Activated CD4-positive, alpha-beta memory T cell treated with anti-CD3 and anti-CD28 coated beads, Interleukin-2, amount 10 ng/mL, durations not matched to agents 7 days and 5 days (primary cell): ENCODE measurements at regions of chr12 and their contacts with region 1.

Region 1: DNA sequence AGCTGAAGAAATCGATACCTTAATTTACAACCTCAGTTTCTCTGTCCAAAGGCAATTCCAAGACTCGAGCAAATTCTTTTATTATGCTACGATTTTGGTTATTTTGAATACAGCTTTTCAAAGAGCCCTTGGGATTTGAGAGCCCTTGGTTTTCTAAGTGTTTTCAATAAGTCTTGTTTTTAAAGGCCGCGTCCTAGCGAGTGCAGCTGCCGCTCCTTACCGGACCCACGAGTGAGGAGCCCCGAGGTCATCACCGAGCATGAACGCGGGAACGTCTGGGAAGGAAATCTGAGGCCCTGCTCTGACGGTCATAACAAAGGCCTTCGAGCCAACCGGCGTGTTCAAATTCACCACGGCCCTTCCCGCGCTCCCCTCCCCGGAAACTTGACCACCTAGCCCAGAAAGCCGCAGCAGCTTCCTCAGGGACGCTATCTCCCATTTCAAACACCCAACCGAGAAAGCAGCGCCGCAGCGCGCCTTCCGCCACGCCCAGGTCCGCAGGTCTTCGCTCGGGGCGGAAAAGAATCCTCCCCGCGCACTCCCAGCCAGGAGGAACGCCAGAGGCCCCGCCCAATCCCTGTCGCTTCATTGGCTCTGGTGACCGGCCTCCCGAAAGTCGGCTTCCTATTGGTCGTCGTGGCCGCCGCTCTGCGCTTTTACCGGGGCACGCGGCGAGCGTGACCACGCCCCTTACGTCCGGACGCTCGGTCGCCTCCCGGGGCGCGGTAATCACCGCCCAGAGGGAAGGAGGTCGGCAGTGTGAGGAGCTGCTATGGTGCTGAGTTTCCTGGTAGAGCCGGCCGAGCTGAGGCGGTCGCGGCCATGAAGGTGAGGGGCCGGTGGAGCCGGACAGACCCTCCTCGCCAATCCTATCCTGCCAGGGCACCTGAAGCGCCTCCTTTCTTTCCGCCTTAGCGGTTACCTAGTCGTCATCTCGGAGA is at the start of gene RNF34:
- DNase-seq: peak; percentile 99
- H3K4me3 Mint-ChIP-seq: peak within 1 kb of the TSS; percentile 90
- H3K27ac Mint-ChIP-seq: peak within 1 kb of the TSS; percentile 97
- H3K4me1 Mint-ChIP-seq: peaks cover 42% of the 10 kb centered on the region
- H3K27me3 Mint-ChIP-seq: no peaks in the 10 kb centered on the region
- total RNA-seq, gene RNF34: 88.2 to 90.1 TPM

Region 2: GRCh38 chr12:121296618-121297434 is 102.8 kb before region 1 on chr12 and contains the start of gene CAMKK2:
- CTCF ChIA-PET with region 1: no interaction called
- POLR2A ChIA-PET with region 1: interaction called, 23 read pairs
- DNase-seq: peak; percentile 90
- H3K4me3 Mint-ChIP-seq: peak within 1 kb of the TSS; percentile 88
- H3K27ac Mint-ChIP-seq: peak within 1 kb of the TSS; percentile 75
- H3K4me1 Mint-ChIP-seq: peaks cover 42% of the 10 kb centered on the region
- H3K27me3 Mint-ChIP-seq: peaks cover 1% of the 10 kb centered on the region
- total RNA-seq, gene CAMKK2: 27.6 to 29.1 TPM

Region 3: DNA sequence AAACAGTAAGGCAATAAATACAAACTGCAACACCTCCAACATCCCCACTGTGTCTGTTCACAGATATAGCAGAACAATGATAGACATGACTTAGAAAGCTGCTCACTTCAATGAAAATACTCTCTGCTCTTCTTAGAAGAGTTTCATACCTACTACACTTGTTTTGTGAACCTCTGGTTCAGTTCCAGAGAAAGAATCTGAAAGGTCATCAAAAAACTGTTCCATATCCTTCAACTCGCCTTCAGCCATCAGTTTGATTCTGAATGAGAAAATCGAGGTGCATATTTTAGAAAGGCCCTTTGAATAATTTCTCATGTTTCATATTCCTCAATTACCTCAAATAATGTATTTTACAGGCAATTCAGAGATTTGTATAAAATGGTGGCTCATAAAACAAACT is 52.9 kb before region 1 on chr12:
- CTCF ChIA-PET with region 1: interaction called, 7 read pairs
- POLR2A ChIA-PET with region 1: interaction called, 142 read pairs
- DNase-seq: no peak
- H3K4me3 Mint-ChIP-seq: no peak overlapping the region
- H3K27ac Mint-ChIP-seq: no peak overlapping the region
- H3K4me1 Mint-ChIP-seq: peaks cover 41% of the 10 kb centered on the region
- H3K27me3 Mint-ChIP-seq: no peaks in the 10 kb centered on the region

Region 4: GRCh38 chr12:121417847-121418246 is 18.2 kb after region 1 on chr12:
- CTCF ChIA-PET with region 1: interaction called, 4 read pairs
- POLR2A ChIA-PET with region 1: interaction called, 32 read pairs
- DNase-seq: no peak
- H3K4me3 Mint-ChIP-seq: no peak overlapping the region
- H3K27ac Mint-ChIP-seq: no peak overlapping the region
- H3K4me1 Mint-ChIP-seq: peaks cover 11% of the 10 kb centered on the region
- H3K27me3 Mint-ChIP-seq: no peaks in the 10 kb centered on the region

Region 5: GRCh38 chr12:121432740-121433480 is 33.2 kb after region 1 on chr12:
- CTCF ChIA-PET with region 1: no interaction called
- POLR2A ChIA-PET with region 1: interaction called, 14 read pairs
- DNase-seq: no peak
- H3K4me3 Mint-ChIP-seq: no peak overlapping the region
- H3K27ac Mint-ChIP-seq: no peak overlapping the region
- H3K4me1 Mint-ChIP-seq: peaks cover 2% of the 10 kb centered on the region
- H3K27me3 Mint-ChIP-seq: no peaks in the 10 kb centered on the region

Region 6: GRCh38 chr12:121499929-121500793 is 100.5 kb after region 1 on chr12:
- CTCF ChIA-PET with region 1: no interaction called
- POLR2A ChIA-PET with region 1: no interaction called
- DNase-seq: peak; percentile 73
- H3K4me3 Mint-ChIP-seq: no peak overlapping the region
- H3K27ac Mint-ChIP-seq: no peak overlapping the region
- H3K4me1 Mint-ChIP-seq: peaks cover 16% of the 10 kb centered on the region
- H3K27me3 Mint-ChIP-seq: no peaks in the 10 kb centered on the region

Region 7: DNA sequence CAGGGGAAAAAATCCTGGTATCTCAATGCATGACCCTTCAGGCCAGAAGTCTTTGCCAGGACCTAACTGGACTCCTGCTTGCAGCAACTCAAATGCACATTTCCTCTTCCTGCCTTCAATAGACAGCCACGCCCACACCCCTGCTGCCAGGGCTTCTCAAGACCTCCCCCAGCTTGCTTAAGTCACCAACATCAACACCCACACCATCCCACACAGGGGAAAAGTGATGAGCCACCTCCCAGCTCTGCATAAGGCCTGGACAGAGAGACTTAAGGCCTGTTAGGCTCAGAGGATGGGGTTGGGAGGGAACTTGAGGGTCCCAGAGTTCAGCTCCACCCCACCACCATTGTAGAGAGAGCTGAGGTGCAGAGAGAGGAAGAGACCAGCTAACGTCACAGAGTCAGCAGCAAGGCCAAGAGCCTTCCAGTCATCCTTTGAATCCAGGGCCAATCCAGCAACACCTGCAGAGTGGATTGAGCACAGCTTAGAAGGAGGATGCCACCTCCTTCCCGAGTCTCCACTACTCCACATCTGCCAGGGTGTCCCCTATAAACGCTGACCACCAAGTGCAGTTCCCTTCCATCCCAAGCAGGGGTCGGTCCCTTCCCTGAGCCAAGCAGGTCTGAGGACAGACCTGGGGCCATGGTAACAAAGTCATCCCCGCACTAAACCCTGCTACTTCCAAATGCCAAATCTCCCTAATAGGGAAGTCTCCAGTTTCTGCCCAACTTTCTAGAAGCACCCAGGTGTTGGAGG is 131.1 kb after region 1 on chr12:
- CTCF ChIA-PET with region 1: no interaction called
- POLR2A ChIA-PET with region 1: no interaction called
- DNase-seq: peak; percentile 80
- H3K4me3 Mint-ChIP-seq: peak overlapping the region; percentile 3
- H3K27ac Mint-ChIP-seq: peak overlapping the region; percentile 82
- H3K4me1 Mint-ChIP-seq: peaks cover 52% of the 10 kb centered on the region
- H3K27me3 Mint-ChIP-seq: no peaks in the 10 kb centered on the region

Region 8: DNA sequence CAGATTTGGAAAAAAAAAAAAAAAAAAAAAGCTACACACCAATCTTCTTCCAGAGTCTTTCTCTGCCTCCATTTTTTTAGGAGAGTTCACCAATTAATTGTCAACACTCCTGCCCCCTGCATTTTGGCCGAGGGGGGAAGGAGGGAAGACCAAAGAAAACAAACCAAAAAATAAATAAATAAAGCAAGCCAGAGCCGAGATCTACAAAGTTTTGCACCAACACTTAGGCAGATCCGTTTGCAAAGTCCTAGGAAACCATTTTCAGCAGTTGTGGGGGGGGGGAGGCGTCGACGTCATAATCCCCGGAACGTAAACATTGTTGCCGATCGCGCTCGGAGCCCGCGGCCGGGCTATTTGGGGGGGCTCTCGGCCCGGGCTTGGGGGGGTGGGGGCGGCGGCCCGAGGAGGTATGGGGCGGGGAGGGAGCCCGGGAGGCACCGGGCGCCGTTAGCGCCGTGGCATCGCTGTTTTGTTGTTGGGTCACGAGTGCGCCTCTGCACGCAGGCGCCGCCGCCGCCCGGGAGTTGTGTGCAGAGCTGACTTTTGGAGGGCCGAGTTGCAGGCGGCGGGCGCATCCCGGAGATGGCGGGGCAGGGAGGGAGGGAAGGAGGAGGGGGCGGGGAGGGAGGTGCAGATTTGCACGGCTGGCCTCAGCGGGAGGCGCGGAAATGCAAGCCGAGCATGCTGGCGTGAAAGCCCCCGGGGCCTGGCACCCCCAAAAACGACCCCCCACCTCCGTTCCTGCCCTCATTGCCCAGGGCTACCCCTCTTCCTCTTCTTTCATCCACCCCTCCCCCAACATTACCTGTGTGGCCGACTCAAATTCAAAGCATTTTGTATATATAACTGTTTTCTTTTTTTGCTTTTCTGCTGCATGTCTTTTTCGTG is 180.6 kb after region 1 on chr12:
- CTCF ChIA-PET with region 1: no interaction called
- POLR2A ChIA-PET with region 1: interaction called, 17 read pairs
- DNase-seq: peak; percentile 80
- H3K4me3 Mint-ChIP-seq: peak overlapping the region; percentile 97
- H3K27ac Mint-ChIP-seq: peak overlapping the region; percentile 99
- H3K4me1 Mint-ChIP-seq: peaks cover 38% of the 10 kb centered on the region
- H3K27me3 Mint-ChIP-seq: no peaks in the 10 kb centered on the region